Mammary epithelial cell (primary cell): ENCODE measurements at regions of chr12 and their contacts with region 1.

Region 1: GRCh38 chr12:26338586-26339572 is 143.5 kb downstream of the SSPN start:
- DNase-seq: peak; percentile 83
- H3K4me3 ChIP-seq: no peak overlapping the region
- H3K27ac ChIP-seq: peak overlapping the region; percentile 40
- H3K4me1 ChIP-seq: peaks cover 23% of the 10 kb centered on the region
- H3K27me3 ChIP-seq: no peaks in the 10 kb centered on the region
- CTCF ChIP-seq: no peak

Region 2: GRCh38 chr12:26323673-26324072 is 15.2 kb before region 1 on chr12:
- CTCF ChIA-PET with region 1: no interaction called
- dilution Hi-C with region 1: no loop called
- in situ Hi-C with region 1: no loop called
- intact Hi-C with region 1: loop called (anchors 2 kb)
- DNase-seq: no peak
- H3K4me3 ChIP-seq: no peak overlapping the region
- H3K27ac ChIP-seq: no peak overlapping the region
- H3K4me1 ChIP-seq: peaks cover 15% of the 10 kb centered on the region
- H3K27me3 ChIP-seq: no peaks in the 10 kb centered on the region
- CTCF ChIP-seq: no peak

Region 3: DNA sequence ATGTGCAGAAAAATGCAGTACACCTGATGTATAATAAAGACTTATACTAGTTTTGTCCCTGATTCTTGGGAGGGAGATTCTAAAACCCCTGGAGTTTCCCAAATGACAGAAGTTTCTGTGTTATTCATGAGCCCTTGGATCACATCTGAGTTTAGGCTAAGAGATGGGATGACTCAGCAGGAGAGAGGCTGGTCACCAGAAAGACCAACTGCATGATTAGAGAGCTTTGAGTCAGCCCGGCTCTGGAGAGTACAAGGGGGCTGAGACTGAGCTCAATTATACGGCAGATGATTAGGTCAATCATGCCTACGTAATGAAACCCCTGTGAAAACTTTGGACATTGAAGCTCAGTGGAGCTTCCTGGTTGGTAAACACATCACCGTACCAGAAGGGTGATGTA is 30.7 kb after region 1 on chr12:
- CTCF ChIA-PET with region 1: no interaction called
- dilution Hi-C with region 1: no loop called
- in situ Hi-C with region 1: no loop called
- intact Hi-C with region 1: no loop called
- DNase-seq: peak; percentile 99
- H3K4me3 ChIP-seq: no peak overlapping the region
- H3K27ac ChIP-seq: peak overlapping the region; percentile 33
- H3K4me1 ChIP-seq: peaks cover 19% of the 10 kb centered on the region
- H3K27me3 ChIP-seq: no peaks in the 10 kb centered on the region
- CTCF ChIP-seq: no peak

Region 4: GRCh38 chr12:26668847-26669246 is 330.0 kb after region 1 on chr12:
- CTCF ChIA-PET with region 1: no interaction called
- dilution Hi-C with region 1: no loop called
- in situ Hi-C with region 1: no loop called
- intact Hi-C with region 1: no loop called
- DNase-seq: no peak
- H3K4me3 ChIP-seq: no peak overlapping the region
- H3K27ac ChIP-seq: no peak overlapping the region
- H3K4me1 ChIP-seq: no peaks in the 10 kb centered on the region
- H3K27me3 ChIP-seq: no peaks in the 10 kb centered on the region
- CTCF ChIP-seq: no peak